ENCODE measurements at regions of chr17 and their contacts with region 1.

Region 1: GRCh38 chr17:39153599-39154051 is 2.2 kb upstream of the PLXDC1 start:
- DNase-seq: peak; percentile 85
- H3K4me3 ChIP-seq: peak overlapping the region; percentile 76
- H3K27ac ChIP-seq: peak overlapping the region; percentile 65
- H3K4me1 ChIP-seq: peaks cover 11% of the 10 kb centered on the region
- CTCF ChIP-seq: no peak

Region 2: DNA sequence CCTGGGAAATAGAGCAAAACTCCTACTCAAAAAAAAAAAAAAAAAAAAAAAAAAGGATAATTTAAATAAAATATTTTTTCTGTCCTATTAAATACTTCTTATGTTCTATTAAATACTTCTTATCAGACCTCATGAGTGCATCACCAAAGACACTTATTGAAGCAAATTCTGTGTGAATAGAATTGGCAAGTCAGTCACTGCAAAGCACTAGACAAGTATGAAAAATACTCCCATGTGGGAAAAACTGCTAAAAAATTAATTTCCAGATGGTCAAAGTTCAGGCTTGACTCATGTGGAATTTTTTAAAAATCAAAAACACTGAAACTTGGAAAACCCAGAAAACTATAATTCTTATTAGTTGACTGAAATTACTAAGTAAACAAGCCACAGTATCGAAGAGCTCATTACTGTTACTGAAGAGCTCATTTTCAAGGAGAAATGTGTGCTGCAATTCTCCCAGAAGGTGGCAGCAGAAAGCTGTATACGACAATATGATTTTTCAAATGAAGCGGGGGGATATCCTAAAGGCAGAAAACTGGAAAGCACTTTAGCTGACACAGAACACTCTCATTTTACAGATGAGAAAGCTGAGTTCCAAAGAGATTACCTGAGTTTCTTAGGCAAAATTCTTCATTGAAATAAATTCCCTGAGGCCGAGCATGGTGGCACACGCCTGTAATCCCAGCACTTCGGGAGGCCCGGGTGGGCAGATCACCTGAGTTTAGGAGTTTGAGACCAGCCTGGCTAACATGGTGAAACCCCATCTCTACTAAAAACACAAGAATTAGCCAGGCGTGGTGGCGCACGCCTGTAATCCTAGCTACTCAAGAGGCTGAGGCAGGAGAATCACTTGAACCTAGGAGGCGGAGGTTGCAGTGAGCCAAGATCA is 170.5 kb before region 1 on chr17:
- CTCF ChIA-PET with region 1: interaction called, 18 read pairs
- POLR2A ChIA-PET with region 1: interaction called, 8 read pairs
- intact Hi-C with region 1: loop called (anchors 1 kb)
- DNase-seq: peak; percentile 82
- H3K4me3 ChIP-seq: no peak overlapping the region
- H3K27ac ChIP-seq: no peak overlapping the region
- H3K4me1 ChIP-seq: peaks cover 4% of the 10 kb centered on the region
- CTCF ChIP-seq: peak; percentile 96

Region 3: DNA sequence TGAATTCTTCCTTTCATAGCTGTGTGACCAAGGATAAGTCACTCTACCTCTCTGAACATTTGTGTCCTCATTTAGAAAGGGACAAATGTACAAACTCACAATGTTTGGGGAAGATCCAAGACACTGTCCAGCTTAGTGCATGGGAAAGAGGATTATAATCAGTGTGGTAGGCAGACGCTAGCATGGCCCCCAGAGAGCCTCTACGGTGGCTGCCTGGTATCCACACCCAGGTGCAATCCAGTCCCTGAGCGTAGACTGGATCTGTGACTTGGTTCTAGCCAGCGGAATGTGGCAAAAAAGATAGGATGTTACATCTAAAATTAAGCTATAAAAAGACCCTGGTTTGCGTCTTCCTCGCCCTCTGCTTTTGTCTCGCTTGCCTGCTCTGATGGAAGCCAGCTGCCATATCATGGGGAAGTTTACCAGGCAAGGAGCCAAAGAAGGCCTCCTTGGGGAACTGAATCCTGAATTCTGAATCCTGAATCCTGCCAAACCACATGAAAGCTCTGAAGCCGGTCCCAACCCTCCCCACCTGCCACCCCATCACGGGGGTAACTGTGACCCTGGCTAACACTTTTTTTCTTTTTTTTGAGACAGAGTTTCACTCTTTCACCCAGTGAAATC is 53.9 kb before region 1 on chr17:
- CTCF ChIA-PET with region 1: no interaction called
- POLR2A ChIA-PET with region 1: no interaction called
- intact Hi-C with region 1: loop called (anchors 10 kb)
- DNase-seq: no peak
- H3K4me3 ChIP-seq: no peak overlapping the region
- H3K27ac ChIP-seq: no peak overlapping the region
- H3K4me1 ChIP-seq: peaks cover 54% of the 10 kb centered on the region
- CTCF ChIP-seq: no peak

Region 4: DNA sequence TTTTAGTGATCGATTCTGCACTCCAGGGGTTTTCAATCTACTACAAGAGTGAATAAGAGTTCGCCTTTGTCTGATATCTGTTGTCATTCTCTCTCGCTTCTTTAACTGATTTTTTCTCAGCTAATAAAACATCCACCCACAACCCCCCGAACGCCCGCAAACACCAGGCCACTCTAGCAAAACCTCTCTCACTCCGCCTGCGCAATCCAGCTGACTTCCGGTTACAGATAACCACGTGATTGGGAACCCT is 46.1 kb after region 1 on chr17:
- CTCF ChIA-PET with region 1: no interaction called
- POLR2A ChIA-PET with region 1: interaction called, 3 read pairs
- intact Hi-C with region 1: loop called (anchors 1 kb)
- DNase-seq: peak; percentile 98
- H3K4me3 ChIP-seq: peak overlapping the region; percentile 91
- H3K27ac ChIP-seq: peak overlapping the region; percentile 88
- H3K4me1 ChIP-seq: peaks cover 73% of the 10 kb centered on the region
- CTCF ChIP-seq: no peak